Heart right ventricle (tissue), 16 donors: ENCODE measurements at regions of chr6 and their contacts with region 1.

Region 1: DNA sequence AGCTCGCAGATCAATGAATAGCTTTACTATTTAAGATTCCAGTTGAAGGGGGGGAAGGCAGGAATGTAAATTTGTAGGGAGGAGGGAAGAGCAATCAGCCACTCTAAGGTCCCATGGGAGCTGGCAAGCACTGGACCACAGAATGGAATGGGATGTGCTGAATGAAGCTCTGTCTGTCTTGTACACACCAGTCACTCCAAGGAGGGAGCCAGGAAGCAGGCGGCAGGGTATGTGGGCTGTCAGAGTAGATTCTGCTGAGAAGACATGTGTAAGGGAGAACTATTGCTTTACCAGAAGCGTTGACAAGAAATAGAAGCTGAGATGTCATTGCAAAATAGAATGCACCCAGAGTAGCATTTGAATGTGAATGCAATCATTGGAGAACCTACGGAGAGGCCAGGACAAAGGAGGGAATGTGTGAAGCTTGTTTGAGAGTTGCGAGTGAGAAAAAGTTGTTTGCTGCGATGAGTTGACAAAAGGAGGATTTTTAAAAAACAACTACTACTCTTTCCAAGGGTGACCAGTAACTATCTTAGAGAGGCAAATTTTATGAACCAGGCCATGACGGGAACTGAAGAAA is 25.2 kb upstream of the PDE7B start:
- DNase-seq: no peak
- ATAC-seq: no peak
- H3K4me3 ChIP-seq: no peak overlapping the region
- H3K27ac ChIP-seq: no peak overlapping the region
- H3K4me1 ChIP-seq: no peaks in the 10 kb centered on the region
- H3K27me3 ChIP-seq: peaks cover 0 to 12% (median 0%) of the 10 kb centered on the region in 7 donors
- CTCF ChIP-seq: no peak

Region 2: GRCh38 chr6:135640449-135641111 is 185.7 kb before region 1 on chr6:
- intact Hi-C with region 1: no loop called
- DNase-seq: no peak
- ATAC-seq: no peak
- H3K4me3 ChIP-seq: no peak overlapping the region
- H3K27ac ChIP-seq: no peak overlapping the region
- H3K4me1 ChIP-seq: no peaks in the 10 kb centered on the region
- H3K27me3 ChIP-seq: no peaks in the 10 kb centered on the region
- CTCF ChIP-seq: no peak

Region 3: DNA sequence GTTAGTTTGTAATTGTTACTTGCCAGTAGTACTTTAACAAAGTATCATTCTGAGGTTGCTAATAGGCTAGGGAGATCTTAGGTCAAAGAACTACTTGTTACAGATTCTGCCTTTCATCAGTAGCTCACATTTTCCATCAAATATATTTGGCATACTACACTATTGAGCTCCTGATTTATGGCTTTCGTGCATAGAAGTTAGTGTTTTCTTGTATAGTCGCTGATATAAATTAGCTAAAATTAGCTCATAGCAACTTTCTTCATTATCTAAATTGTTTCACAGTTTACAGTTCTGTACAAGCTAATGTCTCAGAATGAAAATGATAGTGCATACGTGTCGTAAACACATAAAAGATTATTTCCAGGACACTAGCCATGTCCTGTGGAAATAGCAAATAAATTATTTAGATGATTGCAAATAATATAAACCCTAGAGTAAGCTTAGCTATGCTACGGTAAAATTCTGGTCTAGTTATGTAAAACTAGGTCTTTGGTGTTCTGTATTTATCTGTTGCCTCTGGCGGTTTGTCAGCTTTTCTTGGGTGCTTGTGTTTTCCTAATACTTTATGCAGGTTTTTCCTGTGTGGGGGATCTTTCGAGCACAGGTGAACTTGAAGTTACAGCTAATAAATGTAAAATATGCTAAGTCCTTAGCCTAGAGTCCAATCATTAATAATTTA is 40.3 kb after region 1 on chr6:
- intact Hi-C with region 1: loop called in 1 of 10 experiments (anchors 2 kb)
- DNase-seq: no peak
- ATAC-seq: peak in 1 of 8 donors; percentile 33
- H3K4me3 ChIP-seq: peak overlapping the region in 7 of 10 donors; percentile 2 to 39 (median 31)
- H3K27ac ChIP-seq: peak overlapping the region in 3 of 10 donors; percentile 47 to 59 (median 57)
- H3K4me1 ChIP-seq: peaks cover 0 to 46% (median 9%) of the 10 kb centered on the region in 9 donors
- H3K27me3 ChIP-seq: no peaks in the 10 kb centered on the region
- CTCF ChIP-seq: no peak